ENCODE measurements at regions of chr1 and their contacts with region 1.

Region 1: GRCh38 chr1:229258031-229258756 is 12.7 kb upstream of the RAB4A start:
- DNase-seq: peak; percentile 37
- ATAC-seq: peak; percentile 87

Region 2: GRCh38 chr1:228664399-228664914 is 593.7 kb before region 1 on chr1:
- intact Hi-C with region 1: loop called (anchors 10 kb)
- DNase-seq: peak; percentile 78
- ATAC-seq: peak; percentile 67

Region 3: DNA sequence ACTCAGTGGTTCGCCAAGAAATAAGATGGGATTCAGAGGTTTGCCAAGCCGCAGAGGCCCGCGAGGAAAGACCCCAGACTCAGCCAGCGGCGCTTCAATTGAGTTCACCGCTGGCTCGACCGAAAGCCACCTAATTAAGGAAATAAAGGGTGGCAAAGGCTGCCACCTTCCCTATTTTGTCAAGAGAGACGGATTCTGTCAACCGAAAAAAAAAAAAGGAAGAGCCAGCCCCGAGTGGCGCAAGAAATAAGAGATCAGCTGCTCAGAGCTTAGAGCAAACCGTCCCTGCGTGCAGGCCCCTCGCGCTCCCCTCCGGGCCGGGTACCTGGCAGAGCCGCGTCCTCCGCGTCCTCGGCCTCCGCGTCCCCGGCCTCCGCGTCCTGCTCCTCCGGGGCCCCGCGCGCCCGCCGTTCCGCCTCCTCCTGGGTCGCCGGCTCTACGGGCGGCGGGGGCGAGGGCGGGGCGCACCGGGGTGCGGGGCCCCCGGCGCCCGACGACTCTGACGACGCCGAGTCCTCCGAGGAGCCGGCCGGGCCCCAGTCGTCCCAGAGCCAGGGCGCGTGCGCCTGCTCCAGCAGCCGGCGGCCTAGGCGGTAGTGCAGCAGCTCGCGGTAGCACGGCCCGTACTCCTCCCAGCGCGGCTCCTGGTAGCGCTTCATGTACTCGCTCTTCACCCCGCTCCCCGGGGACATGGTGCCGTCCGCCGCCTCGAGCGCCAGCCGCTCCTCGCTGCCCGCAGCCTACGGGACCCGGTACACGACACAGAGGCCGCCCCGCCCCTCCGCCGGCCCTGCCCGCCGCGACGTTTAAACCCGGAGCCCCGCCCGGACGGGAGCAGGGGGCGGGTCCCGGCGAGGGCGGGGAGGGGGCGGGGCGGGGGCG is 83.8 kb after region 1 on chr1:
- intact Hi-C with region 1: loop called (anchors 5 kb)
- DNase-seq: peak; percentile 92
- ATAC-seq: peak; percentile 98

Region 4: DNA sequence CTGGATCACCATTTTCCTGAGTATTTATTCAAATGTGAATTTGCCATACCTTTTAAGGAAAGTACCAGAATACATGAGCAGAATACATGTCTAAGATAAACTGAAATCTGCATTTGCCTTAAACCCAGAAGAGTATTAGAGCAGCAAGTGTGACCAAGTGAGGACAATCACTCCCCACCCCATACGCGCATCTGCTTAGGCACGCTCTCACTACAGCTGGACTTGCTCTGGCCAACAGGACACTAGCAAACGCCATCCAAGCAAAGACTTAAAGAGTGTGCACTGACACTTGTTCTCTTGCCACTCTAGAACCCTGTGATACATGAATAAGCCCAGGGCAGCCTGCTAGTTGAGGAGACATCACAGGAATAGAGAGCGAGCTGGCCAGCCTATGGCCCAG is 224.3 kb after region 1 on chr1:
- intact Hi-C with region 1: loop called (anchors 2 kb)
- DNase-seq: no peak
- ATAC-seq: no peak

Region 5: DNA sequence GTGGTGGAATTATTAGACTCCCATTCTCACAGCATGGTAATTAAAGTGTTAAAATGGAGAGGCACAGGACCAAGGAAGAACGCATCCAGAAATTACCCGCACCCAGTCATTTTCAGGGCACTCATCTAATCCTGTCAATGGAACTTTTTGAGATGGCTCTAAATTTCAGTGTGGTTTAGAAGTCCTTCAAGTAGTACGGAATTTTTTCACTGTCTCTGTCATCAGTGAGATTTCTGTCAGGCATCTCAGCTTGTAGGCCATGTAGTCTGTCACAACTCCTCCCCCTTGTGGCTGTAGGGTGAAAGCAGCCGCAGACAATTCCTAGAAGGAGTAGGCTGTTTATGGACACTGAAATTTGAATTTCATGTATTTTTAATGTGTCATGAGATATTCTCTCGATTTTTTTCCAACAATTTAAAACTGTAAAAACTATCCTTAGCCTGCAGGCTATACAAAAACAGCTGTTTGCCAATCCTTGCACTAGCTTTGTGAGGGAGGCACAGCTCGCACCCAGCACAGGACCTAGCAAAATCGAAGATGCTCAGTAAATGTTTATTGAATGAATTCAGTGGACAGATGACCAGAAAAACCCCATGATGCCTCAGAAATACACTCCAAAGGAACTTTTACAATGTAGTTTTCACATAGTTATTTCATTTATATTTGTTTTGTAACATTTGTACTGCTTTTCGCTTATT is 256.5 kb after region 1 on chr1:
- intact Hi-C with region 1: loop called (anchors 2 kb)
- DNase-seq: peak; percentile 47
- ATAC-seq: peak; percentile 88